CD8-positive, alpha-beta T cell (primary cell): ENCODE measurements at regions of chr1 and their contacts with region 1.

Region 1: GRCh38 chr1:111720274-111720976 is 18.8 kb downstream of the INKA2 start:
- DNase-seq: no peak
- ATAC-seq: no peak
- H3K4me3 ChIP-seq: no peak overlapping the region
- H3K4me3 Mint-ChIP-seq: no peak overlapping the region
- H3K27ac ChIP-seq: no peak overlapping the region
- H3K27ac Mint-ChIP-seq: no peak overlapping the region
- H3K4me1 ChIP-seq: no peaks in the 10 kb centered on the region
- H3K4me1 Mint-ChIP-seq: peaks cover 15% of the 10 kb centered on the region
- H3K27me3 ChIP-seq: no peaks in the 10 kb centered on the region
- H3K27me3 Mint-ChIP-seq: no peaks in the 10 kb centered on the region
- CTCF ChIP-seq: no peak

Region 2: DNA sequence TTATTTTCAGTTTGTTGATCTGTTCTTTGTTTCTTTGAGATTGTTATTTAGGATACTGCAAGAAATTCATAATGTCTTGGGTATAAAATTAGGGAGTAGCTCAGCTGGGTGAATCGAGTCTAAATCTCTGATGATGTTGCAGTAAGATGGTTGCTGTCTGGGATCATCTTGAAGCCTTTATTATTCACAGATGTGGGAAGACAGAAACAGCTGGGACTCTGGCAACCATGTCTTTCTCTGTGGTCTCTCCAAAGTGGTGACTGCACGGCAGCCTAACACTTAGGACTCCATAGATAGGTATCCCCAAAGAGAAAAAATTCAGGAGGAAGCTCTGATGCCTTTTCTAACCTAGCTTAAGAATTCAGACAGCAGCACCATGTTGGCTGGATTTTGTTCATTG is 48.1 kb before region 1 on chr1:
- CTCF ChIA-PET with region 1: no interaction called
- POLR2A ChIA-PET with region 1: no interaction called
- intact Hi-C with region 1: no loop called
- DNase-seq: no peak
- ATAC-seq: no peak
- H3K4me3 ChIP-seq: no peak overlapping the region
- H3K4me3 Mint-ChIP-seq: peak overlapping the region; percentile 30
- H3K27ac ChIP-seq: no peak overlapping the region
- H3K27ac Mint-ChIP-seq: peak overlapping the region; percentile 69
- H3K4me1 ChIP-seq: peaks cover 34% of the 10 kb centered on the region
- H3K4me1 Mint-ChIP-seq: peaks cover 79% of the 10 kb centered on the region
- H3K27me3 ChIP-seq: no peaks in the 10 kb centered on the region
- H3K27me3 Mint-ChIP-seq: no peaks in the 10 kb centered on the region
- CTCF ChIP-seq: no peak

Region 3: DNA sequence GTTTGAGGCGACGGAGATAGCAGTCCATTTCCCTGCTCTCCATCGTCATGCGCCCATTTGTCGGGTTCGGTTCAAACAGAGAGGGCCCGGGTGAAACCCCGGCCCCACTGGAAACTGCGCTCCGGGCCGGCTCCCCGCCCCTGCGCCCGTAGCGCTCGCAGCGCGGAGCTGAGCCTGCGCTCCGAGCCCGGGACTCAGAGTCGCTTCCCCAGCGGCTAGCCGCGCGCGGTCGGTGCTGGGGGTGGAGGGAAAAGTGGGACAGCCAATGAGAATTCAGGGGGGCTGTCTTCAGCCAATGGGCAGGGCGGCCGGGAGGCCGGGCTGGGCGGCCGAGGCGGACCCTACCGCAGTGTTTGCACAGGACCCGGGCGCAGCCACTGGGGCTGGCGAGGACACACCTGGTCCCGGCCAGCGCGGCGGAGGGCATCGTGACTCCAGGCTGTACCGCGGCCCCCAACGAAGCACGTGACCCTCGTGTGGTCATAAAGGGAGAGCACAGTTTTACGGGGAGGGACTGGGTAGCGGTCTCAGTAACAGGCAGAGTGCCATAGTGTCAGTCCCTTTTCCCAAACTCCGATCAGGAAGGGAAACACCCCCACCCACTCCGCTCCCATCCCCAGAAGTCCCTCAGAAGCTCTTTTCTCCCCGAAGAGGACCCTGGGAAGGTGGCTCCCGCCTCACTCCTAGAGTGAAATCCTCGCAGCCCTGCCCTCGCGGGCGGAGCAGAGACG is 18.9 kb after region 1 on chr1 and contains the start of gene INKA2:
- CTCF ChIA-PET with region 1: interaction called, 7 read pairs
- POLR2A ChIA-PET with region 1: interaction called, 3 read pairs
- intact Hi-C with region 1: loop called in 1 of 2 experiments (anchors 2 kb)
- DNase-seq: peak; percentile 22 to 77 (median 65)
- ATAC-seq: peak; percentile 58
- H3K4me3 ChIP-seq: peak within 1 kb of the TSS; percentile 59 to 74
- H3K4me3 Mint-ChIP-seq: peak within 1 kb of the TSS; percentile 91
- H3K27ac ChIP-seq: no peak within 1 kb of the TSS
- H3K27ac Mint-ChIP-seq: no peak within 1 kb of the TSS
- H3K4me1 ChIP-seq: peaks cover 9% of the 10 kb centered on the region
- H3K4me1 Mint-ChIP-seq: peaks cover 21% of the 10 kb centered on the region
- H3K27me3 ChIP-seq: peaks cover 3 to 32% of the 10 kb centered on the region in 2 experiments
- H3K27me3 Mint-ChIP-seq: peaks cover 25% of the 10 kb centered on the region
- CTCF ChIP-seq: no peak
- total RNA-seq, gene INKA2: 0.36 to 0.54 TPM